Cardiac septum (tissue), 1 donor: ENCODE measurements at regions of chr17 and their contacts with region 1.

Region 1: GRCh38 chr17:80082403-80083135 is 18.8 kb upstream of the GAA start:
- DNase-seq: no peak

Region 2: DNA sequence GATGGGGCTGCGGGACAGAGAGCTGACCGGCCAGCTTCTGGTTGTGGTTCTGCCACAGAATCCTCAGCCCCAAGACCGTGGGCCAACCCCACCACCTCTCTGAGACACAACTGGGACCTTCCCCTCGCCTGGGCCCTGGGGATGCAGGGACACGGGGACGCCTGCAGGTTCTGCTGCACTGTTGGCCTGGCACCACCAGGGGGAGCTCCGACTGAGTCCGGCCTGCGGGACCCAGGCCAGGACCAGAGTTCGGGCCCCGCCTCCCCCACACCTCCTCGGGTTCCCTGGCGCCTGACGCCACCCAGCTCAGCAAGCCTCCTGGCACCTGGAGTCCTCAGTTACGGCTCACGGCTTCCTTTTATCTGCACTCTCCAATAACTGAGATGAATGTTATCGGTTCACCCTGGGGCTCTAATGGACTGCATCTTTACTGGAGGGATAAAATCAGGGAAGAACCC is 74.2 kb before region 1 on chr17:
- intact Hi-C with region 1: loop called (anchors 5 kb)
- DNase-seq: peak; percentile 91

Region 3: GRCh38 chr17:80053102-80053501 is 29.5 kb before region 1 on chr17:
- intact Hi-C with region 1: no loop called
- DNase-seq: no peak

Region 4: GRCh38 chr17:80187515-80187941 is 105.0 kb after region 1 on chr17:
- intact Hi-C with region 1: no loop called
- DNase-seq: no peak